B cell (primary cell): ENCODE measurements at regions of chr16 and their contacts with region 1.

Region 1: DNA sequence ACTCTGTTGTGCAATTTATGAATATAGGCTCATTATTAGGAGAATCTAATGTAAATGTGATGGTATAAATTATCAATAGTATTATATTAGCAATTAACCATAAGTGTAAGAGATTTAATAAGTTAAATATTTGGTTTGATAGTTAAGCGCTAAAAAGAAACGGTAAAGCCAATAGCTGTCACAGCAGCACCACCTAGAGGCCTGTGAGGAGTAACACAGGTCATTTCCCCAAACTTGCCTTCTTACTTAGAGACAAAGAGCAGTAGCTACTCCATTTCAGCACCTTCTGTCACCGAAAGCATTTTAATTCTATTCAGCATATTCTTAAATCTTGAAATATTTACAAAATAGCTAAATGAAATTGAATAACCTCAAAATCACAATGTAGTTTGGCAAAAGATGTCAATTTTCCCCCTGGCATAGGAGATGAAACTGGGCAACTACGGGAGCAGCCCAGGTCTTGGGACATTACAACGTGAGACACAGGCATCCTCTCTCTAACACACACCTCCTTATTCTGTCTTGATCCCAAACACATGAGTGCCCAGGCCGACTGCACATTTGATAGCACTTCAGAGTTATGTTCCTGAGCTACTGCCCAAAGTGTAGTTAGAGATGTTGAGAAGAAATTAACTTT is 14.2 kb upstream of the DYNLRB2 start:
- DNase-seq: peak; percentile 71
- ATAC-seq: peak; percentile 75
- H3K4me3 ChIP-seq: no peak overlapping the region
- H3K4me3 Mint-ChIP-seq: no peak overlapping the region
- H3K27ac ChIP-seq: no peak overlapping the region
- H3K27ac Mint-ChIP-seq: no peak overlapping the region
- H3K4me1 ChIP-seq: no peaks in the 10 kb centered on the region
- H3K4me1 Mint-ChIP-seq: peaks cover 1% of the 10 kb centered on the region
- H3K27me3 ChIP-seq: no peaks in the 10 kb centered on the region
- H3K27me3 Mint-ChIP-seq: peaks cover 4% of the 10 kb centered on the region
- CTCF ChIP-seq: peak; percentile 94

Region 2: DNA sequence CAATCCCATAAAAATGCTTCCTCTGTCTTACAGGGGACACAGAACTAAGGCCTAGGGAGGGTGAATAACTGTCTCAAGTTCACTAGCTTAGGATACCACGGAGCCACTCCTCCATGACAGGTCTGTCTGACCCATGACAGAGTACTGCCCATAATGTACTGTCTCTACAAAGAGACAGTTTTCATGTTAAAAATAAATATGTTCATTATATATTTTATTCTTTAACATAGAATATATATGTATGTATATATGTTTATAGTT is 14.0 kb before region 1 on chr16:
- CTCF ChIA-PET with region 1: interaction called, 10 read pairs
- POLR2A ChIA-PET with region 1: no interaction called
- intact Hi-C with region 1: no loop called
- DNase-seq: no peak
- ATAC-seq: no peak
- H3K4me3 ChIP-seq: no peak overlapping the region
- H3K4me3 Mint-ChIP-seq: no peak overlapping the region
- H3K27ac ChIP-seq: no peak overlapping the region
- H3K27ac Mint-ChIP-seq: no peak overlapping the region
- H3K4me1 ChIP-seq: no peaks in the 10 kb centered on the region
- H3K4me1 Mint-ChIP-seq: no peaks in the 10 kb centered on the region
- H3K27me3 ChIP-seq: peaks cover 0 to 4% (median 0%) of the 10 kb centered on the region in 4 experiments
- H3K27me3 Mint-ChIP-seq: peaks cover 50% of the 10 kb centered on the region
- CTCF ChIP-seq: no peak

Region 3: DNA sequence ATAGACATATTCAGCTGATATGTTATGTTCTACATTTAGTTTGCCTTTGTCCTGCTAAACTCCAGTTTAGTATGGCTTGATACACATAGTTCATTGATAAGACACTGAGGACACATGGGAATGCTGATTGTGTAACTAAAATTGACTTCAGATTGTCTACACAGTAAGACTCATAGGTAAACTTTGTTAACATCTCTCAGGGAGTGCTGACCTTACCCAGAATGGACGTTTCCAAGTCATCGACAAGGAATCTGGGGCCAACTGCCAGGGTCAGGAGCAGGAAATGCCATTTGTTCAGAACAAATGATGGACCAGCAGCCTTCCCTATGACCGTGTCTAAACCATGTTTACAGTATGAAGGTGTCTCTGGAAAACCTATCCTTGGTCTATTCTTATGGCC is 72.9 kb after region 1 on chr16:
- CTCF ChIA-PET with region 1: no interaction called
- POLR2A ChIA-PET with region 1: no interaction called
- intact Hi-C with region 1: no loop called
- DNase-seq: no peak
- ATAC-seq: no peak
- H3K4me3 ChIP-seq: no peak overlapping the region
- H3K4me3 Mint-ChIP-seq: no peak overlapping the region
- H3K27ac ChIP-seq: no peak overlapping the region
- H3K27ac Mint-ChIP-seq: no peak overlapping the region
- H3K4me1 ChIP-seq: no peaks in the 10 kb centered on the region
- H3K4me1 Mint-ChIP-seq: no peaks in the 10 kb centered on the region
- H3K27me3 ChIP-seq: no peaks in the 10 kb centered on the region
- H3K27me3 Mint-ChIP-seq: peaks cover under 1% of the 10 kb centered on the region
- CTCF ChIP-seq: no peak

Region 4: GRCh38 chr16:80824718-80825364 is 298.3 kb after region 1 on chr16:
- CTCF ChIA-PET with region 1: interaction called, 11 read pairs
- POLR2A ChIA-PET with region 1: no interaction called
- intact Hi-C with region 1: loop called (anchors 5 kb)
- DNase-seq: peak; percentile 67
- ATAC-seq: no peak
- H3K4me3 ChIP-seq: no peak overlapping the region
- H3K4me3 Mint-ChIP-seq: no peak overlapping the region
- H3K27ac ChIP-seq: no peak overlapping the region
- H3K27ac Mint-ChIP-seq: no peak overlapping the region
- H3K4me1 ChIP-seq: no peaks in the 10 kb centered on the region
- H3K4me1 Mint-ChIP-seq: peaks cover 4% of the 10 kb centered on the region
- H3K27me3 ChIP-seq: peaks cover 0 to 3% (median 0%) of the 10 kb centered on the region in 4 experiments
- H3K27me3 Mint-ChIP-seq: no peaks in the 10 kb centered on the region
- CTCF ChIP-seq: peak; percentile 95